PC-9 (cell line): ENCODE measurements at regions of chr20 and their contacts with region 1.

Region 1: GRCh38 chr20:63014710-63015109 is 7.9 kb upstream of the BHLHE23 start:
- DNase-seq: no peak
- H3K4me3 ChIP-seq: no peak overlapping the region
- H3K27ac ChIP-seq: no peak overlapping the region
- H3K4me1 ChIP-seq: peaks cover 5% of the 10 kb centered on the region
- H3K27me3 ChIP-seq: peaks cover 95% of the 10 kb centered on the region
- CTCF ChIP-seq: no peak

Region 2: GRCh38 chr20:63230800-63231268 is 216.1 kb after region 1 on chr20:
- CTCF ChIA-PET with region 1: interaction called, 4 read pairs
- POLR2A ChIA-PET with region 1: interaction called, 22 read pairs
- intact Hi-C with region 1: no loop called
- DNase-seq: no peak
- H3K4me3 ChIP-seq: no peak overlapping the region
- H3K27ac ChIP-seq: no peak overlapping the region
- H3K4me1 ChIP-seq: peaks cover 43% of the 10 kb centered on the region
- H3K27me3 ChIP-seq: no peaks in the 10 kb centered on the region
- CTCF ChIP-seq: no peak